ENCODE measurements at regions of chr19 and their contacts with region 1.

Region 1: GRCh38 chr19:18589380-18590272 is 1.0 kb downstream of the REX1BD start:
- DNase-seq: peak; percentile 61 to 70
- H3K4me3 ChIP-seq: peak overlapping the region; percentile 64 to 93 (median 87)
- H3K27ac ChIP-seq: peak overlapping the region; percentile 72 to 92
- H3K4me1 ChIP-seq: peaks cover 2 to 17% of the 10 kb centered on the region in 2 donors
- H3K27me3 ChIP-seq: no peaks in the 10 kb centered on the region
- CTCF ChIP-seq: peak in 1 of 3 donors; percentile 41
- POLR2A ChIP-seq: no peak

Region 2: GRCh38 chr19:18865973-18866799 is 276.6 kb after region 1 on chr19:
- intact Hi-C with region 1: loop called (anchors 10 kb)
- DNase-seq: no peak
- H3K4me3 ChIP-seq: no peak overlapping the region
- H3K27ac ChIP-seq: peak overlapping the region in 1 of 2 donors; percentile 7
- H3K4me1 ChIP-seq: no peaks in the 10 kb centered on the region
- H3K27me3 ChIP-seq: no peaks in the 10 kb centered on the region
- CTCF ChIP-seq: peak; percentile 60 to 90 (median 78)
- POLR2A ChIP-seq: no peak

Measured in breast epithelium (tissue), 4 donors.